CD4-positive, alpha-beta memory T cell (primary cell): ENCODE measurements at regions of chr16 and their contacts with region 1.

Region 1: GRCh38 chr16:67641779-67642708 is 2.9 kb upstream of the CARMIL2 start:
- DNase-seq: no peak
- H3K4me3 ChIP-seq: no peak overlapping the region
- H3K4me3 Mint-ChIP-seq: no peak overlapping the region
- H3K27ac ChIP-seq: no peak overlapping the region
- H3K27ac Mint-ChIP-seq: peak overlapping the region in 1 of 7 donors; percentile 13
- H3K4me1 ChIP-seq: peaks cover 30% of the 10 kb centered on the region
- H3K4me1 Mint-ChIP-seq: peaks cover 2 to 28% (median 11%) of the 10 kb centered on the region in 4 donors
- H3K27me3 ChIP-seq: no peaks in the 10 kb centered on the region
- H3K27me3 Mint-ChIP-seq: no peaks in the 10 kb centered on the region

Region 2: DNA sequence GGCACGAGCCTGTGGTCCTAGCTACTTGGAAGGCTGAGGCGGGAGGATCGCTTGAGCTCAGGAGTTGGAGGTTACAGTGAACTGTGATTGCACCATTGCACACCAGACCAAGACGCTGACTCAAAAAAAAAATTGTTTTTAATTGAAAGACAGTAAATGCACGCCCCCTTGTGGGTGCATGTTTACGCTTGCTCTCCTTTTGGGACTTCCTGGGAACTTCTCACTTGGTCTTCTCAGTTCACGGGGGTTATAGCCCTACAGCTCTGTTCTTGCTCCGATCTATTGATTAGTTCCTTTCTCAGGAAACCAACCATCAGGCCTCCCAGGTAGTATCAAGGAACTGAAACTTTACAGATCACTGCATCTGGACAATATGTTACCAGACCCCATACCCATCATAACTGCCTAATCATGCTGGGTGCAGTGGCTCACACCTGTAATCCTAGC is 127.6 kb before region 1 on chr16:
- CTCF ChIA-PET with region 1: interaction called, 10 read pairs
- POLR2A ChIA-PET with region 1: no interaction called
- intact Hi-C with region 1: no loop called
- DNase-seq: peak; percentile 74 to 82 (median 79)
- H3K4me3 ChIP-seq: no peak overlapping the region
- H3K4me3 Mint-ChIP-seq: peak overlapping the region in 2 of 8 donors; percentile 50 to 57
- H3K27ac ChIP-seq: no peak overlapping the region
- H3K27ac Mint-ChIP-seq: peak overlapping the region in 3 of 7 donors; percentile 37 to 72 (median 69)
- H3K4me1 ChIP-seq: peaks cover 8% of the 10 kb centered on the region
- H3K4me1 Mint-ChIP-seq: peaks cover 4 to 10% (median 7%) of the 10 kb centered on the region in 4 donors
- H3K27me3 ChIP-seq: no peaks in the 10 kb centered on the region
- H3K27me3 Mint-ChIP-seq: no peaks in the 10 kb centered on the region

Region 3: GRCh38 chr16:67537270-67537635 is 104.8 kb before region 1 on chr16:
- CTCF ChIA-PET with region 1: interaction called, 7 read pairs
- POLR2A ChIA-PET with region 1: interaction called, 29 read pairs
- intact Hi-C with region 1: no loop called
- DNase-seq: peak in 3 of 5 donors; percentile 37 to 66 (median 38)
- H3K4me3 ChIP-seq: peak overlapping the region; percentile 42 to 72
- H3K4me3 Mint-ChIP-seq: peak overlapping the region; percentile 81 to 92 (median 86)
- H3K27ac ChIP-seq: peak overlapping the region; percentile 84
- H3K27ac Mint-ChIP-seq: peak overlapping the region; percentile 90 to 93 (median 92)
- H3K4me1 ChIP-seq: peaks cover 26% of the 10 kb centered on the region
- H3K4me1 Mint-ChIP-seq: peaks cover 18 to 60% (median 34%) of the 10 kb centered on the region in 4 donors
- H3K27me3 ChIP-seq: no peaks in the 10 kb centered on the region
- H3K27me3 Mint-ChIP-seq: no peaks in the 10 kb centered on the region

Region 4: DNA sequence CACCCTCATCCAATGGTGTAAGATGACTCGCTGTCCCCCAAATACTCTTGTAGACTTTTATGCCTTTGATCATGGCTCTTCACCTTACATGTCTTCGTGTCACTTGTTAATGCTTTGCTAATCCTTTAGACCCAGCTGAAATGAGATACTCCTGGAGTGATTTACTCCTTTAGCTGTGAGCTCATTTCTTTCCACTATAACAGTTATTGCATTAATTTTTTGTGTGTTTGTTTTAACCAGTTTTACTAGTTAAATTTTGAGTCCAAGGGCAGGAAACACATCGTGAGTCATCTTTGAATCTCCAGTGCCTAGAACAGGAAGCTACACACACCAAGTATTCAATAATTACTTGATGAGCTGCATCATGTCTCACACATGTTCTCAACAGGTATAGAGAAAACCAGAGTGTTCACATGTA is 86.2 kb before region 1 on chr16:
- CTCF ChIA-PET with region 1: interaction called, 329 read pairs
- POLR2A ChIA-PET with region 1: interaction called, 190 read pairs
- intact Hi-C with region 1: no loop called
- DNase-seq: peak; percentile 36 to 68 (median 40)
- H3K4me3 ChIP-seq: no peak overlapping the region
- H3K4me3 Mint-ChIP-seq: peak overlapping the region in 7 of 8 donors; percentile 18 to 83 (median 70)
- H3K27ac ChIP-seq: peak overlapping the region; percentile 54
- H3K27ac Mint-ChIP-seq: peak overlapping the region; percentile 79 to 93 (median 88)
- H3K4me1 ChIP-seq: peaks cover 57% of the 10 kb centered on the region
- H3K4me1 Mint-ChIP-seq: peaks cover 32 to 58% (median 41%) of the 10 kb centered on the region in 4 donors
- H3K27me3 ChIP-seq: no peaks in the 10 kb centered on the region
- H3K27me3 Mint-ChIP-seq: no peaks in the 10 kb centered on the region

Region 5: DNA sequence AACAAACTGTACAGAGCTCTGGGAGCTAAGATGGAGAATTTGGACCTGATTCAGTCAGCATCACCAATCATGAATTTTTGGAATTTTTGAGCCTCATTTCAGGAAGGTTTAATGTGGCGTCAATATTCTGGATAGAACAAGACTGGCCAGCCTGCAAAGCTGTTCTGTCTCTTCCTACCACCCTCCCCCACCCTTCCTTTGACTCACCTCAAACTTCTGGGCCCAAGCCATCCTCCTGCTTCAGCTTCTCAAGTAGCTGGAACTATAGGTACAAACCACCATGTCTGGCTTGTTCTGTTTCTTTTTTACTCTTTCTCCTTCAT is 47.0 kb before region 1 on chr16:
- CTCF ChIA-PET with region 1: interaction called, 10 read pairs
- POLR2A ChIA-PET with region 1: no interaction called
- intact Hi-C with region 1: no loop called
- DNase-seq: no peak
- H3K4me3 ChIP-seq: no peak overlapping the region
- H3K4me3 Mint-ChIP-seq: no peak overlapping the region
- H3K27ac ChIP-seq: no peak overlapping the region
- H3K27ac Mint-ChIP-seq: peak overlapping the region in 6 of 7 donors; percentile 2 to 86 (median 52)
- H3K4me1 ChIP-seq: peaks cover 28% of the 10 kb centered on the region
- H3K4me1 Mint-ChIP-seq: peaks cover 35 to 66% (median 41%) of the 10 kb centered on the region in 4 donors
- H3K27me3 ChIP-seq: no peaks in the 10 kb centered on the region
- H3K27me3 Mint-ChIP-seq: no peaks in the 10 kb centered on the region

Region 6: GRCh38 chr16:67667817-67668494 is 25.9 kb after region 1 on chr16:
- CTCF ChIA-PET with region 1: interaction called, 33 read pairs
- POLR2A ChIA-PET with region 1: interaction called, 23 read pairs
- intact Hi-C with region 1: loop called (anchors 1 kb)
- DNase-seq: peak; percentile 78 to 90 (median 82)
- H3K4me3 ChIP-seq: peak overlapping the region in 1 of 2 donors; percentile 89
- H3K4me3 Mint-ChIP-seq: peak overlapping the region; percentile 40 to 92 (median 63)
- H3K27ac ChIP-seq: peak overlapping the region; percentile 64
- H3K27ac Mint-ChIP-seq: peak overlapping the region in 6 of 7 donors; percentile 41 to 75 (median 62)
- H3K4me1 ChIP-seq: peaks cover 24% of the 10 kb centered on the region
- H3K4me1 Mint-ChIP-seq: peaks cover 8 to 49% (median 15%) of the 10 kb centered on the region in 4 donors
- H3K27me3 ChIP-seq: no peaks in the 10 kb centered on the region
- H3K27me3 Mint-ChIP-seq: no peaks in the 10 kb centered on the region